ENCODE measurements at regions of chr1 and their contacts with region 1.

Region 1: GRCh38 chr1:28581536-28582247 is 10.4 kb upstream of the RAB42 start:
- DNase-seq: peak; percentile 98
- H3K4me3 ChIP-seq: peak overlapping the region; percentile 77 to 100
- H3K27ac ChIP-seq: peak overlapping the region; percentile 69 to 75
- H3K4me1 ChIP-seq: peaks cover 11 to 13% of the 10 kb centered on the region in 2 experiments; a peak in 3 of 4 replicates
- H3K27me3 ChIP-seq: no peaks in the 10 kb centered on the region
- CTCF ChIP-seq: no peak
- EP300 ChIP-seq: peak; percentile 16 to 20; a peak in 1 of 4 replicates
- RAD21 ChIP-seq: no peak

Region 2: DNA sequence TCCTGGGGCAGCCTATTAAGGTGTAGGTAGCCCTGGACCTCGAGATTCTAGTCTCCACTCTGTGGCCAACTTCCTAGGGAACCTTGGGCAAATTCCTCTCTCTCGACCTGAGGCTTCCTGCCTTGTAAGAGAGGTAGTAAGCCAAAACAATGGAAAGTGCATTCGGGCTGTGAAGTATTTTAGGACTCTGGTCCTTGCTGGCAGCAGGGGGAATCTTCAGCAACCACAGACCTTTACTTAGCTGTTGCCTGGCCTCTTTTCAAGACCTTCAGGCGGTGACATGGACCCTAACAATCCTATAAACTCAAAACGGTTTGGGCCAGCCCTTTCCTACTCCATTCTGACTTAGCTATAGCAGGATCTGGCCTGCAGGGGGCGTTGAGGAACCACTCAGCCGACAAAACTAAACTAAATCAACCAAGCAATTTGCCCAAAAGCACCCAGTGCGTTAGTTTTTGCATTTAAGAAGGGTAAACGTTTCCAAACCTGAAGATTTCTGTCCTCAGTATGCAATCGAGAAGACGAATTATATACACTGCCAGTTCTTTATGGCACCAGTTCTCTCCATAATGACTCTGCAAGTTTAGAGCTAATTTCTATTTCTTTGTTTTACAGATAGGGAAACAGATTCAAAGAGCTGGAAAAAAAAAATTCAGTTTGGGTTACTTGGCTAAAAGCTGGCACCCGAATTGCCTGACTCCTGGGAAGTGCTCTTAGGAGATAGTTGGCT is 333.2 kb before region 1 on chr1:
- CTCF ChIA-PET with region 1: interaction called, 11 read pairs
- POLR2A ChIA-PET with region 1: no interaction called
- DNase-seq: peak; percentile 69
- H3K4me3 ChIP-seq: peak overlapping the region; percentile 28 to 62
- H3K27ac ChIP-seq: peak overlapping the region; percentile 70 to 95
- H3K4me1 ChIP-seq: peaks cover 19 to 22% of the 10 kb centered on the region in 2 experiments; a peak in 3 of 4 replicates
- H3K27me3 ChIP-seq: no peaks in the 10 kb centered on the region
- CTCF ChIP-seq: peak; percentile 97
- EP300 ChIP-seq: no peak
- RAD21 ChIP-seq: peak; percentile 88

Region 3: GRCh38 chr1:28359592-28360239 is 222.0 kb before region 1 on chr1:
- CTCF ChIA-PET with region 1: interaction called, 4 read pairs
- POLR2A ChIA-PET with region 1: interaction called, 11 read pairs
- DNase-seq: peak; percentile 75
- H3K4me3 ChIP-seq: peak overlapping the region in 1 of 2 experiments; percentile 39; a peak in 1 of 4 replicates
- H3K27ac ChIP-seq: no peak overlapping the region
- H3K4me1 ChIP-seq: no peaks in the 10 kb centered on the region
- H3K27me3 ChIP-seq: no peaks in the 10 kb centered on the region
- CTCF ChIP-seq: peak; percentile 80
- EP300 ChIP-seq: no peak
- RAD21 ChIP-seq: peak; percentile 78

Region 4: GRCh38 chr1:28437934-28438699 is 143.6 kb before region 1 on chr1:
- CTCF ChIA-PET with region 1: no interaction called
- POLR2A ChIA-PET with region 1: no interaction called
- DNase-seq: peak; percentile 47
- H3K4me3 ChIP-seq: peak overlapping the region; percentile 40 to 67; a peak in 3 of 4 replicates
- H3K27ac ChIP-seq: peak overlapping the region; percentile 80 to 93
- H3K4me1 ChIP-seq: peaks cover 11 to 29% of the 10 kb centered on the region in 2 experiments; a peak in 3 of 4 replicates
- H3K27me3 ChIP-seq: no peaks in the 10 kb centered on the region
- CTCF ChIP-seq: no peak
- EP300 ChIP-seq: peak in 1 of 2 experiments; percentile 10; a peak in 1 of 4 replicates
- RAD21 ChIP-seq: no peak

Region 5: DNA sequence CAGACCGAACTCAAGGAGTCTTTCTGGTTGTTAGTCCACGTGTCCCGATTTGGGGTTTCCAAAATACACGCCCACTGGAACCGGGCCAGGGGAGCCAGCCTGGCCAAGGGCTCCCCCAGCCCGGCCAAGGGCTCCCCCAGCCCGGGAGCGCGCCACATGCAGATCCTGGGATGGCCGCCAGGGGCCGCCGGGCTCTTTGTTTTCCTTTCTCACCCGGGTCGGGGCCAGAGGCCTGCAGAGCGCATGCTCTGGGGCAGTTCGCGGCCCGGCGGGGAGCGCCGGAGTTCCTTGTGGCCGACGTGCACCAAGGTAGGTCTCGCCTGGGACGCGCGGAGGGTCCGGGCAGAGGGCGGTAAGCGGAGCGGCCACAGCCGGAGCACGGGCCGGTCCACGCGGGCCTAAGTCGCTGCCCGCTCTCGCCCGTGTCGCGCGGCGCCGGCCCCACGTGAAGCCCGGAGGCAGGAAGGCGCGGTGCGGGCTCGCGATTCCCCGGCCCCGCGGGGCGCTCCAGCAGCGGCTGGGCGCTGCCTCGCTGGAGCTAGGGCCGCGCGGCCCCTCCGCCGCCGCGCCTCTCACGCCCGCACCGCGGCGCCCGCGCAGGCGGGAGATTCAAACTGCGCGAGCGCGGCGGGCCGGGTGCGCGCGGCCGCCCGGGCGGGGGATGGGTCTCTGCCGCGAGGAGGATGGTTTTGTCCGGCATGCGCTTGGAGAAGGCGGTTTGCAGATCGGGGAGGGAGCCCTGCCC is 63.5 kb before region 1 on chr1:
- CTCF ChIA-PET with region 1: interaction called, 24 read pairs
- POLR2A ChIA-PET with region 1: interaction called, 21 read pairs
- DNase-seq: peak; percentile 96
- H3K4me3 ChIP-seq: peak overlapping the region; percentile 59 to 70
- H3K27ac ChIP-seq: peak overlapping the region; percentile 73 to 76
- H3K4me1 ChIP-seq: peaks cover 4 to 12% of the 10 kb centered on the region in 2 experiments; a peak in 2 of 4 replicates
- H3K27me3 ChIP-seq: no peaks in the 10 kb centered on the region
- CTCF ChIP-seq: peak; percentile 95
- EP300 ChIP-seq: no peak
- RAD21 ChIP-seq: peak; percentile 78

Region 6: GRCh38 chr1:28552758-28553663 is 28.7 kb before region 1 on chr1 and contains the start of gene TRNAU1AP:
- CTCF ChIA-PET with region 1: interaction called, 5 read pairs
- POLR2A ChIA-PET with region 1: interaction called, 59 read pairs
- DNase-seq: peak; percentile 97
- H3K4me3 ChIP-seq: peak within 1 kb of the TSS; percentile 69 to 84
- H3K27ac ChIP-seq: peak within 1 kb of the TSS; percentile 54 to 71
- H3K4me1 ChIP-seq: no peaks in the 10 kb centered on the region; a peak in 2 of 4 replicates
- H3K27me3 ChIP-seq: no peaks in the 10 kb centered on the region
- CTCF ChIP-seq: no peak
- EP300 ChIP-seq: peak in 1 of 2 experiments; percentile 28; a peak in 2 of 4 replicates
- RAD21 ChIP-seq: no peak
- polyA plus RNA-seq, gene TRNAU1AP: 25.8 and 31.2 TPM in 2 replicates

Region 7: GRCh38 chr1:28602536-28603439 is 21.1 kb after region 1 on chr1:
- CTCF ChIA-PET with region 1: interaction called, 17 read pairs
- POLR2A ChIA-PET with region 1: interaction called, 14 read pairs
- DNase-seq: peak; percentile 80
- H3K4me3 ChIP-seq: no peak overlapping the region; a peak in 1 of 4 replicates
- H3K27ac ChIP-seq: peak overlapping the region in 1 of 2 experiments; percentile 69; a peak in 2 of 4 replicates
- H3K4me1 ChIP-seq: peaks cover 0 to 13% of the 10 kb centered on the region in 2 experiments; a peak in 3 of 4 replicates
- H3K27me3 ChIP-seq: no peaks in the 10 kb centered on the region
- CTCF ChIP-seq: peak; percentile 86
- EP300 ChIP-seq: no peak
- RAD21 ChIP-seq: peak; percentile 92

Region 8: GRCh38 chr1:28648474-28649198 is 66.9 kb after region 1 on chr1 and contains the start of gene RNU11:
- CTCF ChIA-PET with region 1: no interaction called
- POLR2A ChIA-PET with region 1: interaction called, 12 read pairs
- DNase-seq: peak; percentile 73
- H3K4me3 ChIP-seq: peak within 1 kb of the TSS; percentile 39 to 40
- H3K27ac ChIP-seq: peak within 1 kb of the TSS; percentile 96 to 99
- H3K4me1 ChIP-seq: peaks cover 0 to 9% of the 10 kb centered on the region in 2 experiments; a peak in 2 of 4 replicates
- H3K27me3 ChIP-seq: no peaks in the 10 kb centered on the region
- CTCF ChIP-seq: no peak
- EP300 ChIP-seq: peak; percentile 15 to 80; a peak in 1 of 4 replicates
- RAD21 ChIP-seq: no peak; the same call in 1 of the 2 replicates
- polyA plus RNA-seq, gene RNU11: not detected in 2 replicates

Measured in SK-N-SH (cell line).